Naive thymus-derived CD4-positive, alpha-beta T cell (primary cell): ENCODE measurements at regions of chr17 and their contacts with region 1.

Region 1: GRCh38 chr17:60392042-60392844 is at the start of gene USP32:
- DNase-seq: peak; percentile 94 to 98 (median 96)
- ATAC-seq: peak; percentile 95
- H3K4me3 ChIP-seq: peak within 1 kb of the TSS; percentile 97
- H3K4me3 Mint-ChIP-seq: peak within 1 kb of the TSS; percentile 93 to 99 (median 96)
- H3K27ac ChIP-seq: peak within 1 kb of the TSS; percentile 92
- H3K27ac Mint-ChIP-seq: peak within 1 kb of the TSS; percentile 92 to 99 (median 97)
- H3K4me1 ChIP-seq: peaks cover 5 to 18% of the 10 kb centered on the region in 2 donors
- H3K4me1 Mint-ChIP-seq: peaks cover 30 to 55% (median 41%) of the 10 kb centered on the region in 7 donors
- H3K27me3 ChIP-seq: no peaks in the 10 kb centered on the region
- H3K27me3 Mint-ChIP-seq: no peaks in the 10 kb centered on the region
- total RNA-seq, gene USP32: 31.6 to 58.1 (median 35.4) TPM

Region 2: GRCh38 chr17:59964482-59965328 is 427.5 kb before region 1 on chr17 and contains the start of gene RNFT1:
- CTCF ChIA-PET with region 1: no interaction called
- POLR2A ChIA-PET with region 1: no interaction called
- intact Hi-C with region 1: loop called in 1 of 2 experiments (anchors 5 kb)
- DNase-seq: peak; percentile 78 to 97 (median 88)
- ATAC-seq: peak; percentile 97
- H3K4me3 ChIP-seq: peak within 1 kb of the TSS; percentile 92
- H3K4me3 Mint-ChIP-seq: peak within 1 kb of the TSS; percentile 86 to 99 (median 94)
- H3K27ac ChIP-seq: peak within 1 kb of the TSS; percentile 84
- H3K27ac Mint-ChIP-seq: peak within 1 kb of the TSS; percentile 88 to 99 (median 94)
- H3K4me1 ChIP-seq: peaks cover 16 to 18% of the 10 kb centered on the region in 2 donors
- H3K4me1 Mint-ChIP-seq: peaks cover 16 to 32% (median 23%) of the 10 kb centered on the region in 7 donors
- H3K27me3 ChIP-seq: no peaks in the 10 kb centered on the region
- H3K27me3 Mint-ChIP-seq: peaks cover 0 to 5% (median 0%) of the 10 kb centered on the region in 5 donors
- total RNA-seq, gene RNFT1: 22.8 to 45.8 (median 33.1) TPM

Region 3: GRCh38 chr17:60354223-60354622 is 38.0 kb before region 1 on chr17:
- CTCF ChIA-PET with region 1: no interaction called
- POLR2A ChIA-PET with region 1: interaction called, 3 read pairs
- intact Hi-C with region 1: loop called in 1 of 2 experiments (anchors 2 kb)
- DNase-seq: no peak
- ATAC-seq: no peak
- H3K4me3 ChIP-seq: no peak overlapping the region
- H3K4me3 Mint-ChIP-seq: no peak overlapping the region
- H3K27ac ChIP-seq: no peak overlapping the region
- H3K27ac Mint-ChIP-seq: no peak overlapping the region
- H3K4me1 ChIP-seq: peaks cover 0 to 7% of the 10 kb centered on the region in 2 donors
- H3K4me1 Mint-ChIP-seq: peaks cover 21 to 45% (median 33%) of the 10 kb centered on the region in 7 donors
- H3K27me3 ChIP-seq: no peaks in the 10 kb centered on the region
- H3K27me3 Mint-ChIP-seq: no peaks in the 10 kb centered on the region

Region 4: DNA sequence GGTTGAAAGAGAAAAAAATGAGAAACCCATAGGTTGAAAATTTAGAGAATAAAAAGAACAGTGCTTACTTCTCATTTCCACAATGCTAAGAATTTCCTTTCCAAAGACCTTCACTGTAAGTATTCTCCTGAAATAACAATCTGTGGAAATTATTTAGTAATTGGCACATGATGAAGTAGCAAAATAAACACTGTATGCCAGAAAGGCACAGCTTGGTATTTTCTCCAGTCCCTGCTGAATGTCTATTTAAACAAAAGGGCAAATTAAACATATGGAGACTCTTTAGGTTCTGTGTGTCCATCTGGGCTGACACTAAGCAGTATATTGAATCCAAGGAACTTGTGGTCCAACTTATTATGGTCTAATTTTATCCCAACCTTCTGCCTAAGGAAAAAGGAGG is 76.1 kb after region 1 on chr17:
- CTCF ChIA-PET with region 1: no interaction called
- POLR2A ChIA-PET with region 1: no interaction called
- intact Hi-C with region 1: no loop called
- DNase-seq: no peak
- ATAC-seq: no peak
- H3K4me3 ChIP-seq: no peak overlapping the region
- H3K4me3 Mint-ChIP-seq: no peak overlapping the region
- H3K27ac ChIP-seq: no peak overlapping the region
- H3K27ac Mint-ChIP-seq: peak overlapping the region in 1 of 9 donors; percentile 42
- H3K4me1 ChIP-seq: no peaks in the 10 kb centered on the region
- H3K4me1 Mint-ChIP-seq: peaks cover 5 to 17% (median 12%) of the 10 kb centered on the region in 7 donors
- H3K27me3 ChIP-seq: no peaks in the 10 kb centered on the region
- H3K27me3 Mint-ChIP-seq: no peaks in the 10 kb centered on the region

Region 5: GRCh38 chr17:60525685-60526514 is 133.7 kb after region 1 on chr17 and contains the start of gene APPBP2:
- CTCF ChIA-PET with region 1: no interaction called
- POLR2A ChIA-PET with region 1: interaction called, 8 read pairs
- intact Hi-C with region 1: loop called (anchors 1 kb)
- DNase-seq: peak; percentile 59 to 80 (median 77)
- ATAC-seq: peak; percentile 92
- H3K4me3 ChIP-seq: peak within 1 kb of the TSS; percentile 86
- H3K4me3 Mint-ChIP-seq: peak within 1 kb of the TSS; percentile 98 to 100 (median 99)
- H3K27ac ChIP-seq: peak within 1 kb of the TSS; percentile 99
- H3K27ac Mint-ChIP-seq: peak within 1 kb of the TSS; percentile 96 to 99 (median 98)
- H3K4me1 ChIP-seq: peaks cover 19 to 25% of the 10 kb centered on the region in 2 donors
- H3K4me1 Mint-ChIP-seq: peaks cover 31 to 63% (median 55%) of the 10 kb centered on the region in 7 donors
- H3K27me3 ChIP-seq: no peaks in the 10 kb centered on the region
- H3K27me3 Mint-ChIP-seq: no peaks in the 10 kb centered on the region
- total RNA-seq, gene APPBP2: 24.2 to 47.5 (median 33.0) TPM